Adrenal gland (tissue), 19 donors: ENCODE measurements at regions of chr5 and their contacts with region 1.

Region 1: GRCh38 chr5:86880785-86881492 is 263.2 kb downstream of the COX7C start:
- DNase-seq: peak; percentile 40 to 85 (median 60)
- H3K4me3 ChIP-seq: no peak overlapping the region
- H3K27ac ChIP-seq: no peak overlapping the region
- H3K4me1 ChIP-seq: no peaks in the 10 kb centered on the region
- H3K27me3 ChIP-seq: no peaks in the 10 kb centered on the region
- CTCF ChIP-seq: peak; percentile 64 to 93 (median 88)
- POLR2A ChIP-seq: no peak

Region 2: GRCh38 chr5:86617756-86618576 is 263.0 kb before region 1 on chr5 and contains the start of gene COX7C:
- intact Hi-C with region 1: no loop called
- DNase-seq: peak; percentile 91 to 98 (median 96)
- H3K4me3 ChIP-seq: peak within 1 kb of the TSS; percentile 59 to 94 (median 78)
- H3K27ac ChIP-seq: peak within 1 kb of the TSS in 4 of 5 donors; percentile 73 to 88 (median 81)
- H3K4me1 ChIP-seq: peaks cover 0 to 12% of the 10 kb centered on the region in 2 donors
- H3K27me3 ChIP-seq: no peaks in the 10 kb centered on the region
- CTCF ChIP-seq: no peak
- POLR2A ChIP-seq: peak; percentile 82 to 88
- total RNA-seq, gene COX7C: 197 to 829 (median 632) TPM

Region 3: GRCh38 chr5:86968301-86968753 is 87.4 kb after region 1 on chr5:
- intact Hi-C with region 1: loop called in 1 of 2 experiments (anchors 5 kb)
- DNase-seq: peak in 1 of 7 donors; percentile 4
- H3K4me3 ChIP-seq: no peak overlapping the region
- H3K27ac ChIP-seq: no peak overlapping the region
- H3K4me1 ChIP-seq: peaks cover 0 to 3% of the 10 kb centered on the region in 2 donors
- H3K27me3 ChIP-seq: no peaks in the 10 kb centered on the region
- CTCF ChIP-seq: peak in 5 of 6 experiments; percentile 50 to 77 (median 52)
- POLR2A ChIP-seq: no peak